B cell (primary cell): ENCODE measurements at regions of chr1 and their contacts with region 1.

Region 1: DNA sequence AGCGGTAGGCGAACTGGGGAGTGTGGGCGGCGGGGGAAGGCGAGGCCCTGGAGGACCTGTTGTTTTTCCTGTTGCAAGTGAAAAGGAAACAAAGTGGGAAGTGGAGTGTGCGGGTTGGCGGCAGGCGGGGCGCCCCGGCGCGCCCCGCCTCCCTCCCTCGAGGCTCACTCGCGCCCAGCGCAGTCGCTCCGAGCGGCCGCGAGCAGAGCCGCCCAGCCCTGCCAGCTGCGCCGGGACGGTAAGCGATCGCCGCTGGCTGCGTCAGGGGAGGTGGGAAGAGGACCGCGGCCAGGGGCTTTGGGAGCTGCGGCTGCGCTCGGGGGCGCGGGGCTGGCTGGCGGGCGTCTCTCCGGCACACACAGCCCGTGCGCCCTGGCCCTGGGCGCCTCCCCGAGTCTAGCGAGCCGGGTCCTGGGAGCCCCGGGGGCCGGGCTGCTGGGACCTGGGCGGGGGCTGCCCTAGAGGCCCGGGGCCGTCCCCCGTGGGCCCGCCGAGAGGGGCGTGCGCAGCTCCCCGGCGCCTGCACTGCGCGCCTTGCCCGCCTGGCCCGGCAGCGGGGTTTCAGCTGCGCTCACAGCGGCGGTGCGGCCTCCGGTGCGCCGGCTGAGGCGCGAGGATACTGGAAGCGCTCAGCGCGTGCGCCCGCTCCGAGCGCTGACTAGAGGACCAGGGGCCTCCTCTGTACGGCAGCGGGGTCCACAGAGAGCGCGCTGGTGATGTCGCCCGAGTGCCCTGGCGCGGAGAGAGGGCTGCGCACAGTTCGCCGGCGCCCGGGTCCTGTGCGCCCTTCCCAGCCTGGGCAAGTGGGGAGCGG is at the start of gene PIK3CD:
- DNase-seq: peak; percentile 68
- ATAC-seq: peak; percentile 22
- H3K4me3 ChIP-seq: peak within 1 kb of the TSS; percentile 57 to 96 (median 74)
- H3K4me3 Mint-ChIP-seq: peak within 1 kb of the TSS; percentile 98
- H3K27ac ChIP-seq: peak within 1 kb of the TSS; percentile 77 to 82
- H3K27ac Mint-ChIP-seq: peak within 1 kb of the TSS; percentile 99
- H3K4me1 ChIP-seq: peaks cover 39 to 57% of the 10 kb centered on the region in 2 donors
- H3K4me1 Mint-ChIP-seq: peaks cover 58% of the 10 kb centered on the region
- H3K27me3 ChIP-seq: no peaks in the 10 kb centered on the region
- H3K27me3 Mint-ChIP-seq: no peaks in the 10 kb centered on the region
- CTCF ChIP-seq: no peak
- total RNA-seq, gene PIK3CD: 222 and 223 TPM in 2 replicates

Region 2: DNA sequence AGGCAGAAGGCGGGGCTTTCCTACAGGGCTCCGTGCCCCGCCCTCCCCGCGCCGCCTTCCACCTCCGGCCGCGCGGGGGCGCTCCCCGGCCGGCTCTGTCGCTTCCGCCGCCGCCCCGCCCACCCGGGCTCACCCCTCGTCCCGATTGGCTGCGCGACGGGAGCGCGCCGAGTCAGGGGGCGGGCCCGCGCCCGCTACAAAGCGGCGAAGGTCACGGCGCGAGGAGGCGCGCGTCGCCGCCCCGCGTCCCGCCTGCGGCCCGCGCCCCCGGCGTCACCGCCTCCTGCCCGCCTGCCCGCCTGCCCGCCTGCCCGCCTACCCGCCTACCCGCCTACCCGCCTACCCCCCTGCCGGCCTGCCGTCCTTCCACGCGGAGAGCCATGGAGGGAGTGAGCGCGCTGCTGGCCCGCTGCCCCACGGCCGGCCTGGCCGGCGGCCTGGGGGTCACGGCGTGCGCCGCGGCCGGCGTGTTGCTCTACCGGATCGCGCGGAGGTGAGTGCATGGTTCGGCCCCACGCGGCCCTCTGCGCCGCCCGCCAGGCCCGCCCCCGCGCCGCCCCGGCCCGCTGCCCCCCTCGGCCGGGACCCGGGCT is 63.1 kb before region 1 on chr1 and contains the start of gene TMEM201:
- CTCF ChIA-PET with region 1: interaction called, 6 read pairs
- POLR2A ChIA-PET with region 1: no interaction called
- intact Hi-C with region 1: loop called (anchors 1 kb)
- DNase-seq: peak; percentile 96
- ATAC-seq: peak; percentile 91
- H3K4me3 ChIP-seq: peak within 1 kb of the TSS; percentile 33 to 62 (median 58)
- H3K4me3 Mint-ChIP-seq: peak within 1 kb of the TSS; percentile 91
- H3K27ac ChIP-seq: peak within 1 kb of the TSS in 1 of 2 donors; percentile 6
- H3K27ac Mint-ChIP-seq: peak within 1 kb of the TSS; percentile 82
- H3K4me1 ChIP-seq: peaks cover 33 to 42% of the 10 kb centered on the region in 2 donors
- H3K4me1 Mint-ChIP-seq: peaks cover 38% of the 10 kb centered on the region
- H3K27me3 ChIP-seq: no peaks in the 10 kb centered on the region
- H3K27me3 Mint-ChIP-seq: no peaks in the 10 kb centered on the region
- CTCF ChIP-seq: peak; percentile 80
- total RNA-seq, gene TMEM201: 9.1 and 11.2 TPM in 2 replicates

Region 3: GRCh38 chr1:9671377-9672140 is 19.8 kb after region 1 on chr1:
- CTCF ChIA-PET with region 1: interaction called, 7 read pairs
- POLR2A ChIA-PET with region 1: interaction called, 10 read pairs
- intact Hi-C with region 1: loop called (anchors 1 kb)
- DNase-seq: no peak
- ATAC-seq: no peak
- H3K4me3 ChIP-seq: no peak overlapping the region
- H3K4me3 Mint-ChIP-seq: no peak overlapping the region
- H3K27ac ChIP-seq: peak overlapping the region in 1 of 2 donors; percentile 2
- H3K27ac Mint-ChIP-seq: peak overlapping the region; percentile 79
- H3K4me1 ChIP-seq: peaks cover 11 to 46% of the 10 kb centered on the region in 2 donors
- H3K4me1 Mint-ChIP-seq: peaks cover 46% of the 10 kb centered on the region
- H3K27me3 ChIP-seq: no peaks in the 10 kb centered on the region
- H3K27me3 Mint-ChIP-seq: no peaks in the 10 kb centered on the region
- CTCF ChIP-seq: no peak

Region 4: DNA sequence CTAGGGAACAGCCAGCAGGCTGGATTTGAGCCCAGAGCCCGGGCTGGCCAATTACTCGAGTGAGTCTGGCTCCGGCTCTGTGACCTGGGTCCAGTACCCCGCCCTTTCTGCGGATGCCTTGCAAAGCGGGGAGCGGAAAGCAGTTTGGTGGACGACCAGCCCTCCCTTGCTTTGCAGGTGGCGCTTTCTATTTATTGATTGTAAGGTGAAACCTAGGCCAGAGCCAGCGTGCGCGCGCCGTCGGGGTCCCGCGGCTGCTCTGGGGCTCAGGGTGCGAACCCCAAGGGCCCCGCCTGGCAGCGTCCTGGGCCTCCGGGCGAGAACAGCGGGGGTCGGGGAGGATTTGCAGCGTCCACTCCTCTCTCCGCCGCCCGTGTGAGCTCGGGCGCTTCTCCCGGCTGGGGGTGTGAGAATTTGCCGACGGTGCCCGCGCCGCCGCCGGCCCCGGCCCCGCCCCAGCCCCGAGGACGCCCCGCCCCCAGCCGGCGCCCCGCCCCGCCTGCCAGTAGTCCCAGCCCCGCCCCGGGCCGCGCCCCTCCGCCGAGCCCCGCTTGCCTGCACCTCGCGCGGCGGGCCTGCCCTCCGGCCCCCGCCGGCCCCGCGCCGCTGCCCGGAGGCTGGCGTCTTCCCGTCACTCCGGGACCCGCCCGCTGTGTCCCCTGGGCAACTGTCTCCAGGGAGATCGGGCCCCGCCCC is 37.4 kb after region 1 on chr1:
- CTCF ChIA-PET with region 1: interaction called, 11 read pairs
- POLR2A ChIA-PET with region 1: interaction called, 51 read pairs
- intact Hi-C with region 1: loop called (anchors 1 kb)
- DNase-seq: peak; percentile 81
- ATAC-seq: peak; percentile 83
- H3K4me3 ChIP-seq: peak overlapping the region; percentile 34 to 68 (median 59)
- H3K4me3 Mint-ChIP-seq: peak overlapping the region; percentile 85
- H3K27ac ChIP-seq: peak overlapping the region in 1 of 2 donors; percentile 47
- H3K27ac Mint-ChIP-seq: peak overlapping the region; percentile 50
- H3K4me1 ChIP-seq: peaks cover 59 to 63% of the 10 kb centered on the region in 2 donors
- H3K4me1 Mint-ChIP-seq: peaks cover 64% of the 10 kb centered on the region
- H3K27me3 ChIP-seq: no peaks in the 10 kb centered on the region
- H3K27me3 Mint-ChIP-seq: no peaks in the 10 kb centered on the region
- CTCF ChIP-seq: no peak

Region 5: GRCh38 chr1:9717193-9718005 is 65.6 kb after region 1 on chr1:
- CTCF ChIA-PET with region 1: interaction called, 29 read pairs
- POLR2A ChIA-PET with region 1: interaction called, 49 read pairs
- intact Hi-C with region 1: loop called (anchors 1 kb)
- DNase-seq: peak; percentile 94
- ATAC-seq: peak; percentile 85
- H3K4me3 ChIP-seq: peak overlapping the region in 4 of 5 experiments; percentile 38 to 61 (median 50)
- H3K4me3 Mint-ChIP-seq: peak overlapping the region; percentile 81
- H3K27ac ChIP-seq: peak overlapping the region; percentile 90 to 96
- H3K27ac Mint-ChIP-seq: peak overlapping the region; percentile 95
- H3K4me1 ChIP-seq: peaks cover 54 to 69% of the 10 kb centered on the region in 2 donors
- H3K4me1 Mint-ChIP-seq: peaks cover 38% of the 10 kb centered on the region
- H3K27me3 ChIP-seq: no peaks in the 10 kb centered on the region
- H3K27me3 Mint-ChIP-seq: no peaks in the 10 kb centered on the region
- CTCF ChIP-seq: peak; percentile 12

Region 6: GRCh38 chr1:10575616-10576015 is 923.8 kb after region 1 on chr1:
- CTCF ChIA-PET with region 1: no interaction called
- POLR2A ChIA-PET with region 1: interaction called, 12 read pairs
- intact Hi-C with region 1: no loop called
- DNase-seq: no peak
- ATAC-seq: no peak
- H3K4me3 ChIP-seq: no peak overlapping the region
- H3K4me3 Mint-ChIP-seq: no peak overlapping the region
- H3K27ac ChIP-seq: no peak overlapping the region
- H3K27ac Mint-ChIP-seq: no peak overlapping the region
- H3K4me1 ChIP-seq: no peaks in the 10 kb centered on the region
- H3K4me1 Mint-ChIP-seq: no peaks in the 10 kb centered on the region
- H3K27me3 ChIP-seq: no peaks in the 10 kb centered on the region
- H3K27me3 Mint-ChIP-seq: no peaks in the 10 kb centered on the region
- CTCF ChIP-seq: no peak

Region 7: DNA sequence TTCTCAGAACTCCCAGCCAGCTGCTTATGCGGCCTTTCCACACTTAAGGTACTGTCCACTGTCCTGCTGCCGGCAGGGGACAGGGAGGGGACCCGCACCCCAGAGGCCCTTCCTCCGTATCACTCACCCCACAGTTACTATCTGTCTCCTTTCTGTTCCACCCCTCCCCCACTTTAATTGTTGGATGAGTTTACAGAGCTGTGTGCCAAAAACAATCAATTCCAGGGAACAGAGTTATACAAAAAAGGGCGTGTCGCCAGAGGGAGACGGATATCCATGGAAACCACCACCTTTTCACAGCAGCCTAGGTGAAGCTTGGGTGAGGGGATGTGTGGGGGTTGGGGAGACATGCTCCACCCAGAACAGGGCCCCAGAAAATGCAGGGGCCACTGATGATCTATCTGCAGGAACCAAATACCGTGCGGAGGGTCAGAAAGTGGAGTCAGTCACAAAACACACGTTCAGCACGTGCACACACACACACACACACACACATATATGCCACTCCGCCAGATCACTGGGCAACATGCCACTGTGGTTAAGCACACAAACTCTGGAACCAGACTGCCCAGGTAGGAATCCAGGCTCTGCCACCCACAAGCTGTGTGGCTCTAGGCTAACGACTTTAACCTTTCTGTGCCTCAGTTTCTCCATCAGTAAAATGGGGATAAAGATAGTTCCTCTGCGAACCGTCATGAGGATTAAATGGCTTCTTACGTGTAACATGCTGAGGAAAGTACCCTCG is 1114.1 kb after region 1 on chr1:
- CTCF ChIA-PET with region 1: no interaction called
- POLR2A ChIA-PET with region 1: no interaction called
- intact Hi-C with region 1: no loop called
- DNase-seq: no peak
- ATAC-seq: no peak
- H3K4me3 ChIP-seq: no peak overlapping the region
- H3K4me3 Mint-ChIP-seq: no peak overlapping the region
- H3K27ac ChIP-seq: no peak overlapping the region
- H3K27ac Mint-ChIP-seq: no peak overlapping the region
- H3K4me1 ChIP-seq: no peaks in the 10 kb centered on the region
- H3K4me1 Mint-ChIP-seq: no peaks in the 10 kb centered on the region
- H3K27me3 ChIP-seq: no peaks in the 10 kb centered on the region
- H3K27me3 Mint-ChIP-seq: peaks cover 3% of the 10 kb centered on the region
- CTCF ChIP-seq: no peak